ENCODE measurements at regions of chr19 and their contacts with region 1.

Region 1: GRCh38 chr19:58581227-58582151 is 8.4 kb upstream of the MZF1 start:
- DNase-seq: no peak
- H3K4me3 ChIP-seq: no peak overlapping the region
- CTCF ChIP-seq: peak; percentile 100

Region 2: GRCh38 chr19:58439576-58440554 is 141.6 kb before region 1 on chr19 and contains the start of gene ZNF132:
- CTCF ChIA-PET with region 1: no interaction called
- POLR2A ChIA-PET with region 1: no interaction called
- DNase-seq: peak; percentile 98
- H3K4me3 ChIP-seq: peak within 1 kb of the TSS; percentile 92
- CTCF ChIP-seq: no peak

Region 3: GRCh38 chr19:58499021-58499927 is 82.2 kb before region 1 on chr19:
- CTCF ChIA-PET with region 1: no interaction called
- POLR2A ChIA-PET with region 1: no interaction called
- DNase-seq: peak; percentile 89
- H3K4me3 ChIP-seq: peak overlapping the region; percentile 70
- CTCF ChIP-seq: no peak

Region 4: GRCh38 chr19:58547323-58548312 is 33.9 kb before region 1 on chr19:
- CTCF ChIA-PET with region 1: no interaction called
- POLR2A ChIA-PET with region 1: no interaction called
- DNase-seq: no peak
- H3K4me3 ChIP-seq: peak overlapping the region; percentile 84; the same call in 1 of the 2 replicates
- CTCF ChIP-seq: no peak

Region 5: DNA sequence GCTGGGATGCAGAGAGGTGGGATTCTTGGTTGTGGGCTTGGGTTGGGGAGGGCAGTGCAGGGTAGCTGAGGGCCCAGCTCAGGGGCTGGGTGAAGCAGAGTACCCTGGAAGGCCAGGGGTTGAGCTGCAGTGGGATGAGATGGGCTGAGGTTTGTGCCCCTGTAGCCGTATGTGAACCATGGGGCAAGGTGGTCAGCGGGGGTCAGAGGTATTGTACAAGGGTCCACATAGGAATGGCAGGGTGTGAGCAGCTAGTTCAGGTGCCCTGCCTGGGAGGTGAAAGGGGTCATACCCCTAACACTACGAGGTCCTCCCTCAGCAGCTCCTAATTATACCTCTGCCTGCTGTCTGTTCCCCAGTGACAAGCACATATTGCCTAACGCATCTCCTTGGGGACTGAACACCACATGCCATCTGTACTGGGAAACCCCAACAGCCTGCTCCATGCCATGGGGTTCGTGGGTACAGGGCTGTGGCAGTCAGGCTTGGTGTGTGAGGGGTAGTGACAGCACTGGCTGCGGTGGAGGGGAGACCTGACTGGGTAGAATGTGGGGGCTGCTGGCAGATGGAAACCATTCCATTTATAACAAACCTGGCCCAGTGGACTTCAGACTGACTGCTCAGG is 11.7 kb before region 1 on chr19:
- CTCF ChIA-PET with region 1: interaction called, 12 read pairs
- POLR2A ChIA-PET with region 1: no interaction called
- DNase-seq: no peak
- H3K4me3 ChIP-seq: no peak overlapping the region
- CTCF ChIP-seq: no peak